Heart left ventricle (tissue), 16 donors: ENCODE measurements at regions of chr3 and their contacts with region 1.

Region 1: DNA sequence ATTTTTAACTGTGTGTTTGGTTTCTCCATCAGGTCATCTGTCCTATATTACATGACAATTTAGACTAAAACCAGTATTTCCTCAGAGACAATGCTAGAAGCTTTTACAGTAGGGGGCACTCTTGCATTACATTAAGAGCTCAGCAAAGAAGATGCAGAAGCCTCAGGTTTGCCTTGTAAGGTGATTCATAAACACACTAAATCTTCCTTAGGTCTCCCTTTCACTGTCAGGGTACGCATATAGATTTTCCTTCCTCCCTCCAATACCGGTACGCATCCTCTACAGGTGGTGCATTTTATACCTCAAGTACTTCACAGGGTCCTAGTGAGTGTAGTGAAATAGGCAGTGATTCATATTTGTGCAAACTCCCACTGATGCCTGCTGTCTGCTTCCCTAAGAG is 46.5 kb downstream of the CD86 start:
- DNase-seq: no peak
- ATAC-seq: peak in 1 of 4 donors; percentile 18
- H3K4me3 ChIP-seq: no peak overlapping the region
- H3K27ac ChIP-seq: no peak overlapping the region
- H3K4me1 ChIP-seq: peaks cover 0 to 6% (median 0%) of the 10 kb centered on the region in 12 donors
- H3K27me3 ChIP-seq: peaks cover 0 to 9% (median 0%) of the 10 kb centered on the region in 9 donors
- CTCF ChIP-seq: peak in 8 of 12 donors; percentile 11 to 50 (median 38)
- POLR2A ChIP-seq: no peak

Region 2: DNA sequence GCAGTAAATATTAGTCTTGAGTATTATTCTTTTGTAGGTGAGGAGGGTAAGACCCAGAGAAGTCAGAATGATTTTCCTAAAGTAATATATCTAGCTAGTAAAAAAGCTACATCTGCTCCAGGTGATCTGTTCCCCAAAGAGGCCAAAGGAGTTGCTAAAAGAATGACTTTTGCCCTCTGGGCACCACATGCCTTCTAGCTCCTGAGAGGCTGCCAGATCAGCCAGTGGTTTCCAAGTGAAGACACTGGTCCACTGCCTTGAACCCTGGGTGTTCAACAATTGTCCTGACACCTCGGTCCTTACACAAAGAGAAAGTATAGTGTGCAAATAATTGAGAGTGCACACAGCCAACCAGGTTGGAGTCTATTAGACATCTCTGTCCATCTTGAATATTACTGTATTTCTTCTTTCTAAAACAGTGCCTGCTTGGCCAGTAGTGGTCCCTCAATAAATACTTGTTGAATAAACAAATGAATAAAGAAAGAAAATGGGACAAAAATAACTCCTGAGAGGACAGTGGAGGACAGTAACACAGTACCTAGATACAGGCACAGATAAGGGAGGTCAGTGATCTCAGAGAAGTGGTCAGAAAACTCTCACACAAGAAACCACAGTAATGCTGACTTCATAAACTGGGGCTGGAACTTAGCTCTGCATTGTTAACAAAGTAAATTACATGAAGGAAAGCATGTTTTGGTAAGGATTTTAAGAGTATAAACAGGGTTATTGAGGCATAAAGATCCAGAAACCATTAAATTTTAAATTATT is 166.8 kb after region 1 on chr3:
- intact Hi-C with region 1: loop called in 2 of 10 experiments (anchors 2 to 5 kb)
- DNase-seq: no peak
- ATAC-seq: no peak
- H3K4me3 ChIP-seq: no peak overlapping the region
- H3K27ac ChIP-seq: no peak overlapping the region
- H3K4me1 ChIP-seq: peaks cover 0 to 7% (median 0%) of the 10 kb centered on the region in 12 donors
- H3K27me3 ChIP-seq: peaks cover 0 to 4% (median 0%) of the 10 kb centered on the region in 9 donors
- CTCF ChIP-seq: no peak
- POLR2A ChIP-seq: no peak